B cell (primary cell): ENCODE measurements at regions of chr1 and their contacts with region 1.

Region 1: DNA sequence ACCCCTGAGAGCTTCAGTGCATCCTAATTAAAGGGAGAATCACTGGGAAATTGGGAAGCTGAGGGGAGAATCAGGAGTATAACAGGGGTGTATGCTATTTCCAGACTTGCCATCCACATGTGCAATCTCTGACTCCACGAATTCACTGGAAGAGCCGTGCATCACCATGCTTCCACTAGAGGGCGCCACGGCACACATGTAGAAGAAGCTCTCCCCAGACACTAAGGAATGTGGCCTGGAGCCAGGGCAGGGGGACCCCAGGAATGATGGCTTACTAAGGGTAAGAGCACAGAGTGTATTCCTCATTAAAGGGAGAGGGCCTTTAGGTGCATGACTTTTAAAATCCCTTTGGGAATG is 81.5 kb downstream of the ABCA4 start:
- DNase-seq: peak; percentile 51
- ATAC-seq: no peak
- H3K4me3 ChIP-seq: no peak overlapping the region
- H3K4me3 Mint-ChIP-seq: no peak overlapping the region
- H3K27ac ChIP-seq: no peak overlapping the region
- H3K27ac Mint-ChIP-seq: no peak overlapping the region
- H3K4me1 ChIP-seq: no peaks in the 10 kb centered on the region
- H3K4me1 Mint-ChIP-seq: peaks cover 3% of the 10 kb centered on the region
- H3K27me3 ChIP-seq: peaks cover 0 to 18% (median 4%) of the 10 kb centered on the region in 4 experiments
- H3K27me3 Mint-ChIP-seq: peaks cover 46% of the 10 kb centered on the region
- CTCF ChIP-seq: peak; percentile 79

Region 2: GRCh38 chr1:94009304-94009703 is 30.2 kb before region 1 on chr1:
- CTCF ChIA-PET with region 1: no interaction called
- POLR2A ChIA-PET with region 1: no interaction called
- intact Hi-C with region 1: no loop called
- DNase-seq: no peak
- ATAC-seq: no peak
- H3K4me3 ChIP-seq: no peak overlapping the region
- H3K4me3 Mint-ChIP-seq: no peak overlapping the region
- H3K27ac ChIP-seq: no peak overlapping the region
- H3K27ac Mint-ChIP-seq: no peak overlapping the region
- H3K4me1 ChIP-seq: no peaks in the 10 kb centered on the region
- H3K4me1 Mint-ChIP-seq: no peaks in the 10 kb centered on the region
- H3K27me3 ChIP-seq: no peaks in the 10 kb centered on the region
- H3K27me3 Mint-ChIP-seq: peaks cover 24% of the 10 kb centered on the region
- CTCF ChIP-seq: no peak

Region 3: DNA sequence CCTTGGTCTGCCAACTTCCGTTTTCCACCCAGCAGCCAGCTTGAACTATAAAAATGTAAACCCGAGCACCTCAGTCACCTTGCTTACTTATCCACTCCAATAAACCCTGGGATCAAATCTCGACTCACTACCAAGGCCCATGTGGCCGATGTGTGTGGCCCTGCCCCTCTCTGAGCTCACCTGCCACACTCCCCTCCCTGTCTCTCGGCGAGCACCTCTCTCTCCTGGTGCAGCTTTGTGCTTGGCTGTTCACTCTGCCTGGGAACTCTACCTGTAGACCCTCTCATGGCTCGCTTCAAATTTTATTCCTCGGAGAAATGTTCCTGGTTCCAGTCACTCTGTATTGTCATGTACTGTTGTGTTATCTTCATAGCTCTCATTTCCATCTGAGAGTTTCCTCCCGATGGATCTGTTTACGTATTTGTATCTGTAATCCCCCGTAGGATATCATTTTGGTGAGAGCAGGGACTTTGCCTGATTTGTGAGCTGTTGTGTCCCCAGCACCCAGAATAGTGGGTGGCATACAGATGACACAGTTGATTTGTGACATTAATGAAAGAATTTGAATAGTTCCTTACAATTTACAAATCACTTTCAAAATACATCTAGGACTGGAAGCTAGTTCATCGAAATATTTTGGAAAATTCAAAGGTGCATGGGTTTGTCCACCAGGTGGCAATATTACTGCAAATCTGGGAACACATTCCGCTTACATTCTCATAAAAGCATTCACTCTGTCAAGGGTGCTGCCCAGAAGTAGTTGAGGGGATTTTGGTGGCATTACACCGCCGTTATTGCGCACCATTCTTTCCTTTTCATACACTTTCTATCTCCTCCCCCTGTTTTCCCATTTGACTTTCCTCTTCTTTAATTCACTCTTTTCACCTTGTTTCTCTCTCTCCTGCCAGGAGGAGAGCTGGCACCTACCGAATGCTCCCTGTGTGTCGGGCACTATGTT is 13.8 kb before region 1 on chr1:
- CTCF ChIA-PET with region 1: interaction called, 17 read pairs
- POLR2A ChIA-PET with region 1: no interaction called
- intact Hi-C with region 1: no loop called
- DNase-seq: peak; percentile 26
- ATAC-seq: no peak
- H3K4me3 ChIP-seq: no peak overlapping the region
- H3K4me3 Mint-ChIP-seq: no peak overlapping the region
- H3K27ac ChIP-seq: no peak overlapping the region
- H3K27ac Mint-ChIP-seq: no peak overlapping the region
- H3K4me1 ChIP-seq: no peaks in the 10 kb centered on the region
- H3K4me1 Mint-ChIP-seq: no peaks in the 10 kb centered on the region
- H3K27me3 ChIP-seq: peaks cover 0 to 3% (median 0%) of the 10 kb centered on the region in 4 experiments
- H3K27me3 Mint-ChIP-seq: peaks cover 17% of the 10 kb centered on the region
- CTCF ChIP-seq: peak; percentile 61

Region 4: DNA sequence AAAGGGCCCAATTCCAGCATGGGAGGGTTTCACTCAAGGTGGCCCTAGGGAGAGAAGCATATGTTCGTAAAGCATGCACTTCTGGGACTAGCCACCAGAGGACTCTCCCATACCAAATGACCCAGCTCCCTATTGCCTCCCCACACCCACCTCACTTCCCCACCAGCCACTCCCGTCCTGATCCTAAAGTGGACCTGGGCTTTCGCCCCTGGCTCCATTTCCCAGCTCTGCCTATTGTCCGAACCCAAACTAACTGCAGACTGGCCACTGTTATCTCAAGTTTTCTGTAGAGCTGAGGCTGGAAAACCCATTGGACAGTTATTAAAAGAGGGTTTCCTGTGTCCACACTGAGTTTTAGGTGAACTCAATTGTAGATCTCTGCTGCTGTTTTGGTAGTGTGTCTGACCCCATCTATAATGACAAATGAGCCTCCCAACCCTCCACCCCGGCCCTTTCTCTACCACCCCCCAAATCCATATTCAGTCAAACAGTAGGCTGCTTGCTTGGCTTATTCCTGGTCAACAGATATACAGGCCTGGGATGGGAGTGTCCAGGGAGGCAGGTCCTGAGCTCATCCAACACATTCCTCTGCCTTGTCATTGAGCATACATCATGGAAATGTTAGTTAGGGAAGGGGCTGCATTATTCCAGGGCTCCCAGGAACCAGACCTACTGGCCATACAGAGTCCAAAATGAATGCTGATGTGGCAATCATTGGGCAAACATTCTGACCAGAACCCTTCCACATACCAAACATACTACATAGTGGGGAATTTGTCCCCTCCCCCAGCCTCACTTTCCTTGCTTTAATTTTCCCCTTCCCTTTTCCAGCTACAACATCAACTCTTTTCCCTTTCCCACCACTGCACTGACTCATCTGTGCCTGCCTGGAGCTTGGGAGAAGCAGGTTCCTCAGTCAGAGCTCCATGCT is 22.3 kb after region 1 on chr1:
- CTCF ChIA-PET with region 1: interaction called, 14 read pairs
- POLR2A ChIA-PET with region 1: interaction called, 4 read pairs
- intact Hi-C with region 1: no loop called
- DNase-seq: peak; percentile 32
- ATAC-seq: no peak
- H3K4me3 ChIP-seq: no peak overlapping the region
- H3K4me3 Mint-ChIP-seq: no peak overlapping the region
- H3K27ac ChIP-seq: no peak overlapping the region
- H3K27ac Mint-ChIP-seq: no peak overlapping the region
- H3K4me1 ChIP-seq: no peaks in the 10 kb centered on the region
- H3K4me1 Mint-ChIP-seq: no peaks in the 10 kb centered on the region
- H3K27me3 ChIP-seq: peaks cover 0 to 2% (median 0%) of the 10 kb centered on the region in 4 experiments
- H3K27me3 Mint-ChIP-seq: peaks cover 34% of the 10 kb centered on the region
- CTCF ChIP-seq: peak; percentile 49